Caco-2 (cell line): ENCODE measurements at regions of chr3 and their contacts with region 1.

Region 1: GRCh38 chr3:146189519-146190173 is 28.7 kb upstream of the PLOD2 start:
- DNase-seq: peak in 1 of 2 experiments; percentile 43
- H3K4me3 ChIP-seq: no peak overlapping the region
- H3K4me3 Mint-ChIP-seq: no peak overlapping the region
- H3K27ac Mint-ChIP-seq: no peak overlapping the region
- H3K4me1 ChIP-seq: no peaks in the 10 kb centered on the region
- H3K4me1 Mint-ChIP-seq: no peaks in the 10 kb centered on the region
- H3K27me3 ChIP-seq: no peaks in the 10 kb centered on the region
- H3K27me3 Mint-ChIP-seq: no peaks in the 10 kb centered on the region
- CTCF ChIP-seq: peak; percentile 71 to 81

Region 2: GRCh38 chr3:146065573-146066006 is 124.1 kb before region 1 on chr3:
- CTCF ChIA-PET with region 1: interaction called, 69 read pairs
- POLR2A ChIA-PET with region 1: no interaction called
- intact Hi-C with region 1: loop called (anchors 1 kb)
- DNase-seq: peak in 1 of 2 experiments; percentile 53
- H3K4me3 ChIP-seq: no peak overlapping the region
- H3K4me3 Mint-ChIP-seq: no peak overlapping the region
- H3K27ac Mint-ChIP-seq: no peak overlapping the region
- H3K4me1 ChIP-seq: no peaks in the 10 kb centered on the region
- H3K4me1 Mint-ChIP-seq: no peaks in the 10 kb centered on the region
- H3K27me3 ChIP-seq: no peaks in the 10 kb centered on the region
- H3K27me3 Mint-ChIP-seq: no peaks in the 10 kb centered on the region
- CTCF ChIP-seq: peak; percentile 68 to 69

Region 3: DNA sequence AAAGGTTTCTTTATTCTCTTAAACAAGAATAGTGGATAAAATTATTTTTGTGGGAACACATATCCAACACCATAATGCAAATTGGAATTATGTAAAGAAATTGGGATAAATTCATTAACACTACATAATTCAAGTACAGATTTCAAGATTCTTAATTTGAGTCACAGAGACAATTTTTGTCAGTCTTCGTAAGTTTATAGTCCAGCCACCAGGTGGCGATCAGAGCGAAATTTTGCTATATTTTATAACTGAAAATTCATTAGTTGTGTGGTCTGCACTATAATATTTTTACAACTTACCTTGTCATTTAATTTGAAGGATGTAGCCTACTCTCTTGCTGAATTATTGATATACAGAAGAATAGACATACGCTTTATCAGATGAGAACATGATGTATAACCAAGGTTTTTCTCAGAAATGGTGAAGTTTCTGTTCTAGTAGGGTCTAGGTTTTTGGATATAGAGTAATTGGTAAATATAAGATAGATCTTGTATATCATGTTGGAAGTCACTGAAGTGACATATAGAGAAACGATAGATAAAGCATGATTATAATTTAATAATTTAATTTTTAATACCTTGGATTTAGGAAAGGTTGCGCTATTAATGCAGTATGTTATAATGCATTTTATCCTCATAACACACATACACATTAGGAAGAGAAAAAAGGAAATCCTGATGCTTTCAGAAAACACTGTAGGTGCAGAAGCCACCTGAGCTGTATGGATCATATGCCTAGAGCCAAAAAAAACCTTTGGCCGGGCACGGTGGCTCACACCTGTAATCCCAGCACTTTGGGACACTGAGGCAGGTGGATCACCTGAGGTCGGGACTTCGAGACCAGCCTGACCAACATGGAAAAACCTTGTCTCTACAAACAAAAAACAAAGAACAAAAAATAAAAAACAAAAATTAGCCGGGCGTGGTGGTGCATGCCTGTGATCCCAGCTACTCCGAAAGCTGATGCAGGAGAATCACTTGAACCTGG is 29.5 kb after region 1 on chr3:
- CTCF ChIA-PET with region 1: interaction called, 12 read pairs
- POLR2A ChIA-PET with region 1: no interaction called
- intact Hi-C with region 1: loop called (anchors 1 kb)
- DNase-seq: peak in 1 of 2 experiments; percentile 23
- H3K4me3 ChIP-seq: no peak overlapping the region
- H3K4me3 Mint-ChIP-seq: no peak overlapping the region
- H3K27ac Mint-ChIP-seq: no peak overlapping the region
- H3K4me1 ChIP-seq: peaks cover 40% of the 10 kb centered on the region
- H3K4me1 Mint-ChIP-seq: peaks cover 19% of the 10 kb centered on the region
- H3K27me3 ChIP-seq: no peaks in the 10 kb centered on the region
- H3K27me3 Mint-ChIP-seq: no peaks in the 10 kb centered on the region
- CTCF ChIP-seq: peak; percentile 61 to 74

Region 4: DNA sequence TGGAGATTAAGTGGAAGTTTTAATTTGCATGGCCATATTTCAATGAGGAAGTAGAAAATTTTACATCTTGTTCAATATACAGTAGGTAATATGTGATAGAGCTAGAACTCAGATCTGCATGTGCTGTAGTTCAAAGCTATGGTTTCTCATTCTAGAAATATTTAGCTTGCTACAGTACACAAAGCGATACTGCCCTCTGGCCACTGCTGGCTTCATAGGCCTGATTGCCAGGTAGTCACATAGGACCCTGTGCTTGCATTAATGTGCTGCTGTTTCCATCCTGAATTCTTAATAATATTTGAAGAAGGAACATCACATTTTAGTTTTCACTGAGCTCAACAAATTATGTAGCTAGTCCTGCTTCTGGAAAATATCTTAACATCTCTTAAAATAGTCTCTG is 192.7 kb after region 1 on chr3:
- CTCF ChIA-PET with region 1: interaction called, 9 read pairs
- POLR2A ChIA-PET with region 1: no interaction called
- intact Hi-C with region 1: loop called (anchors 1 kb)
- DNase-seq: peak; percentile 34 to 45
- H3K4me3 ChIP-seq: no peak overlapping the region
- H3K4me3 Mint-ChIP-seq: no peak overlapping the region
- H3K27ac Mint-ChIP-seq: no peak overlapping the region
- H3K4me1 ChIP-seq: no peaks in the 10 kb centered on the region
- H3K4me1 Mint-ChIP-seq: peaks cover 7% of the 10 kb centered on the region
- H3K27me3 ChIP-seq: no peaks in the 10 kb centered on the region
- H3K27me3 Mint-ChIP-seq: no peaks in the 10 kb centered on the region
- CTCF ChIP-seq: peak; percentile 35 to 66

Region 5: DNA sequence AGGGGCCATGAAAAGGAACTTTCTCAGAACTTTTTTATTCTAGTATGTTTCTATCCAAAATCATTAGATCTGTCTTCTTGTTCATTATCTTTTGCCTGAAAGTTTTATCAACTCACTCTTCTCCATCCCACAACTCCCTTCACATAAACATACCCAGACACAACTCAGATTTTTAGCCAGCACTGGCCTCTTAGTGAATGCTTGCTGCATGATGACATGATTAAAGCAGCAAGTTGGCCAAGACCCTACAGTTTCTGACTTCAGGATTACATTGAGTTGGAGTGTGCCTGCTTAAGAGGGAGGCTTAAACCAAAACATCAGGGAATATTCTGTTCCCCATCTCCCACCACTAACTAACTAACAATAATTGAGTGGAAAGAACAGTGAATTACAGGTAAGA is 241.6 kb after region 1 on chr3:
- CTCF ChIA-PET with region 1: no interaction called
- POLR2A ChIA-PET with region 1: no interaction called
- intact Hi-C with region 1: no loop called
- DNase-seq: no peak
- H3K4me3 ChIP-seq: no peak overlapping the region
- H3K4me3 Mint-ChIP-seq: no peak overlapping the region
- H3K27ac Mint-ChIP-seq: no peak overlapping the region
- H3K4me1 ChIP-seq: no peaks in the 10 kb centered on the region
- H3K4me1 Mint-ChIP-seq: peaks cover 7% of the 10 kb centered on the region
- H3K27me3 ChIP-seq: no peaks in the 10 kb centered on the region
- H3K27me3 Mint-ChIP-seq: peaks cover under 1% of the 10 kb centered on the region
- CTCF ChIP-seq: no peak